Mammary epithelial cell (primary cell): ENCODE measurements at regions of chr1 and their contacts with region 1.

Region 1: GRCh38 chr1:195939844-195940243 is 668.4 kb downstream of the KCNT2 start:
- DNase-seq: peak; percentile 34
- H3K4me3 ChIP-seq: no peak overlapping the region
- H3K27ac ChIP-seq: no peak overlapping the region
- H3K4me1 ChIP-seq: no peaks in the 10 kb centered on the region
- H3K27me3 ChIP-seq: no peaks in the 10 kb centered on the region
- CTCF ChIP-seq: peak; percentile 51 to 74

Region 2: DNA sequence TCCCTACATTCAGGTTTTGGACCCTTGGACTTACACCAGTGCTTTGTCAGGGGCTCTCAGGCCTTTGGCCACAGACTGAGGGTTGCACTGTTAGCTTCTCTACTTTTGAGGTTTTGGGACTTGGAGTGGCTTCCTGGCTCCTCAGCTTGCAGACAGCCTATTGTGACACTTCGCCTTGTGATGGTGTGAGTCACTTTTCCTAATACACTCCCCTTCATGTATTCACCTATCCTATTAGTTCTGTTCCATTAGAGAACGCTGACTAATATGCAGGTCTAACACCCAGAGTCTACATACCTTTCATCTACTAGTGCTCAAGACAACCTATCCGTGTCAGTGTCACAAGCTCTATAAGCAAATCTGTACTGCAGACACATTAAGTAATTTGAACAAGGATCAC is 63.1 kb after region 1 on chr1:
- CTCF ChIA-PET with region 1: no interaction called
- dilution Hi-C with region 1: no loop called
- in situ Hi-C with region 1: no loop called
- intact Hi-C with region 1: loop called (anchors 2 kb)
- DNase-seq: peak; percentile 87
- H3K4me3 ChIP-seq: no peak overlapping the region
- H3K27ac ChIP-seq: peak overlapping the region; percentile 1
- H3K4me1 ChIP-seq: peaks cover 12% of the 10 kb centered on the region
- H3K27me3 ChIP-seq: no peaks in the 10 kb centered on the region
- CTCF ChIP-seq: no peak

Region 3: DNA sequence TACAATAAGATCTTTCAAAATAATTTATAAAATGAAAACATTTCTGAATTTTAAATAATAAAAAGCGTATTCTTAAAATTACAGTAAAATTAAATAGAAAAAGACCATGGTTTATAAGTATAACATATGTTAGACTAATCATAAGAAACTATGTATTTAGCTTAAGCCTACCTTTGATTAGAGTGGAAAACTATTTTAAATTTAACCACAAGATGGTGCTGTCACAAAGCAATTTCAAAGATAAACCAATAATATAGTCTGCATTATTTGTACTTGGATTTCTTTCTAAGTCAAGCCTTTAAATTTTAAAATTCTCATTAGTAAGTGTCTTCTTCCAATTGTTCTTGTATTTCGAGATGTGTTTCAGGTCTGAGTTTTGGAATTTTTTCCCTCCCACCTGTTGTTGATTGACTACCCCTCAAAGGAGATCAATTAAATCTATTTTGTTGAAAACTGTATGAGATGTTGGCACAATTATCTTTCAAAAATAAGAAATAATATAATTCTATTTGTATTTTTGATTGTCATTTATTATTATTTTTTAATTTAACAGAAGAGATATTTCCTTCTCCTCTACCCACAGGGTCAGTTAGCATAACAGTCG is 208.6 kb after region 1 on chr1:
- CTCF ChIA-PET with region 1: interaction called, 5 read pairs
- dilution Hi-C with region 1: no loop called
- in situ Hi-C with region 1: no loop called
- intact Hi-C with region 1: loop called (anchors 1 kb)
- DNase-seq: peak; percentile 23
- H3K4me3 ChIP-seq: no peak overlapping the region
- H3K27ac ChIP-seq: no peak overlapping the region
- H3K4me1 ChIP-seq: peaks cover 8% of the 10 kb centered on the region
- H3K27me3 ChIP-seq: no peaks in the 10 kb centered on the region
- CTCF ChIP-seq: peak; percentile 44 to 51

Region 4: DNA sequence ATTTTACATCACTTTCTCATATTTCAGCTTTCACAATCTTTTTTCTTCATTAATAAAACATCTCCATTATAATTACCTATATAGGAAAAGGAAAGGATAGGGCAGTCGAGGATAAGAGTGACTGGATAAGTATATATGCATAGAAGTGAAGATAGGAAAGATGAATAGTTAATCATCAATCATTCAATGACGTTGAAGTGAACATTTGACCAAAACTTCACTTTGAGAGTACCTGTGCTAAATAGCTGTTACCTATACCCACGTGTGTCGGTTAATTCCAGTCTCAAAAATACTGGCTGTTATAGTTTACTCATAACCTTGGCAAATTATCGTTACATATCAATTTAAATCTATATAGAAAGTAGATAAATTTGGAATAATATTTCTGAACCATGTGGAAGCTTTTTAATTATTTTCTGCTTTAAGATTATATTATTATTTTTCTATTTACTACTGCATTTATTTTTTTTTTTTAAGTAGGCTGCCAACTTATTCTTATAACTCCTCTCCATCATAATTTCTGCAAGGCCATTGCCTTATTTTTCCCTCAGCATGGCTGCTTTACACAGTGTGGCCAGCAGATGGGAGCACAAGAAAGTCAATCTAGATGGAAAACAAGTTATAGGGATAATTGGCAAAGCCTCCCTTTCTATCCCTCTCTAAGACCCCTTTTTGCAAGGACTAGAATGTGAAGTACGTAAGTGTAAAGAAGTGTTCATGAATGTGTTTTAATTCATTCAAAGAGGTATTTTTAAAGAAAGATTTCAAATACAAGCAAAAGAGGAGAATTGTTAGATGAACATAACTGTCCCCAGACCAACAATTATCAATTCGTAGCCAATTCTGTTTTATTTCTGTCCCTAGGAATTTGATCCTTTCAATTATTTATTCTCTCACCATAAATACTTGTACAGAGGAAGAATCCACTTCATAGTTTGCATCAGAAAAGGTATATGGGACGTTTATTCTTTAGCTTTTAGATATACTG is 378.0 kb after region 1 on chr1:
- CTCF ChIA-PET with region 1: no interaction called
- dilution Hi-C with region 1: no loop called
- in situ Hi-C with region 1: loop called (anchors 10 to 25 kb)
- intact Hi-C with region 1: no loop called
- DNase-seq: peak; percentile 11
- H3K4me3 ChIP-seq: no peak overlapping the region
- H3K27ac ChIP-seq: no peak overlapping the region
- H3K4me1 ChIP-seq: no peaks in the 10 kb centered on the region
- H3K27me3 ChIP-seq: no peaks in the 10 kb centered on the region
- CTCF ChIP-seq: peak; percentile 53 to 73